Naive thymus-derived CD4-positive, alpha-beta T cell (primary cell): ENCODE measurements at regions of chr14 and their contacts with region 1.

Region 1: GRCh38 chr14:49862089-49862673 is 9.6 kb upstream of the NEMF start:
- DNase-seq: peak; percentile 78 to 94 (median 89)
- ATAC-seq: peak; percentile 73
- H3K4me3 ChIP-seq: peak overlapping the region; percentile 94
- H3K4me3 Mint-ChIP-seq: no peak overlapping the region
- H3K27ac ChIP-seq: peak overlapping the region; percentile 95
- H3K27ac Mint-ChIP-seq: no peak overlapping the region
- H3K4me1 ChIP-seq: peaks cover 19 to 25% of the 10 kb centered on the region in 2 donors
- H3K4me1 Mint-ChIP-seq: peaks cover 0 to 33% (median 7%) of the 10 kb centered on the region in 7 donors
- H3K27me3 ChIP-seq: no peaks in the 10 kb centered on the region
- H3K27me3 Mint-ChIP-seq: peaks cover 0 to 9% (median 0%) of the 10 kb centered on the region in 5 donors

Region 2: GRCh38 chr14:49585803-49586672 is 276.1 kb before region 1 on chr14 and contains the start of gene RPS29:
- CTCF ChIA-PET with region 1: interaction called, 4 read pairs
- POLR2A ChIA-PET with region 1: interaction called, 8 read pairs
- intact Hi-C with region 1: loop called in 1 of 2 experiments (anchors 1 kb)
- DNase-seq: peak; percentile 97 to 99 (median 99)
- ATAC-seq: peak; percentile 91
- H3K4me3 ChIP-seq: peak within 1 kb of the TSS; percentile 98
- H3K4me3 Mint-ChIP-seq: peak within 1 kb of the TSS; percentile 87 to 100 (median 94)
- H3K27ac ChIP-seq: peak within 1 kb of the TSS; percentile 84
- H3K27ac Mint-ChIP-seq: peak within 1 kb of the TSS; percentile 90 to 100 (median 98)
- H3K4me1 ChIP-seq: peaks cover 19 to 21% of the 10 kb centered on the region in 2 donors
- H3K4me1 Mint-ChIP-seq: peaks cover 33 to 60% (median 46%) of the 10 kb centered on the region in 7 donors
- H3K27me3 ChIP-seq: no peaks in the 10 kb centered on the region
- H3K27me3 Mint-ChIP-seq: peaks cover 0 to 5% (median 0%) of the 10 kb centered on the region in 5 donors
- total RNA-seq, gene RPS29: 2,254 to 4,907 (median 2,729) TPM

Region 3: DNA sequence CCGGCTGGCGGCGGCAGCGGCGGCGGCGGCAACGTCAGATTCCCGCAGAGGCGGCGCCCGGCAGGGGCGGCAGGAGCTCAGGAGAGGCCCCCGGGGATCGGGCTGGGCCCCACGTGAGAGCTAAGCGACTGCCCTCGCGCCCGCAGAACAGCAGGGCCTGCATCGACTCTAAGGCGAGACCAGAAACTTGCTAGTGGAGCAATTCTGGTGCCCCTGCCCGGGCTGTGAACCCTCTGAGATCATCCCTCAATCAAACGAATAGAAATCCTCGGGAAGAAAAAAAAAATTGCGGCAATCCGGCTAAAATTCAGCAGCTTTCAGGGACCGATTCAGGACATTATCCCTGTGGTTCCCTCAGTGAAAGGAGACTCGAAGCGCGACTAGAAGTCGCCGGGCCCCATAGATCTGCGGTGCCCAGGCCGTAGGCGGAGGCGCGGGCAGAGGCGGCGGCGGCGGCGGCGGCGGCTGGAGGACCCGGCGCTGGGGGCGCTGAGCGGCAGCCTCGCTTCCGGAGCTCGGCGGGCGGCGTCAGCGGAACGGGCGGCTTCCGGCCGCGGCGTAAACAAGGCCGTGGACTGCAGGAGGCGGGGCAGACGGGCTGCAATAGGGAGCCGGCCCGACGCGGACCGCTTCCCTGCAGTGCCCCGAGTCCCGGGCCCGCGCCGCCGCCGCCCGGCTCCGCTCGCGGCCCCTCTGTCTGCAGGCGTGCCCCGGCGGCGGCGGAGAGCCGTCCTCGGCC is 94.5 kb before region 1 on chr14 and contains the start of gene KLHDC2:
- CTCF ChIA-PET with region 1: interaction called, 15 read pairs
- POLR2A ChIA-PET with region 1: interaction called, 22 read pairs
- intact Hi-C with region 1: loop called in 1 of 2 experiments (anchors 1 kb)
- DNase-seq: peak; percentile 84 to 94 (median 89)
- ATAC-seq: peak; percentile 88
- H3K4me3 ChIP-seq: peak within 1 kb of the TSS; percentile 62
- H3K4me3 Mint-ChIP-seq: peak within 1 kb of the TSS; percentile 95 to 99 (median 98)
- H3K27ac ChIP-seq: peak within 1 kb of the TSS; percentile 96
- H3K27ac Mint-ChIP-seq: peak within 1 kb of the TSS; percentile 98 to 100 (median 99)
- H3K4me1 ChIP-seq: peaks cover 26 to 27% of the 10 kb centered on the region in 2 donors
- H3K4me1 Mint-ChIP-seq: peaks cover 20 to 46% (median 40%) of the 10 kb centered on the region in 7 donors
- H3K27me3 ChIP-seq: no peaks in the 10 kb centered on the region
- H3K27me3 Mint-ChIP-seq: peaks cover 0 to 2% (median 0%) of the 10 kb centered on the region in 5 donors
- total RNA-seq, gene KLHDC2: 33.2 to 105 (median 84.7) TPM

Region 4: DNA sequence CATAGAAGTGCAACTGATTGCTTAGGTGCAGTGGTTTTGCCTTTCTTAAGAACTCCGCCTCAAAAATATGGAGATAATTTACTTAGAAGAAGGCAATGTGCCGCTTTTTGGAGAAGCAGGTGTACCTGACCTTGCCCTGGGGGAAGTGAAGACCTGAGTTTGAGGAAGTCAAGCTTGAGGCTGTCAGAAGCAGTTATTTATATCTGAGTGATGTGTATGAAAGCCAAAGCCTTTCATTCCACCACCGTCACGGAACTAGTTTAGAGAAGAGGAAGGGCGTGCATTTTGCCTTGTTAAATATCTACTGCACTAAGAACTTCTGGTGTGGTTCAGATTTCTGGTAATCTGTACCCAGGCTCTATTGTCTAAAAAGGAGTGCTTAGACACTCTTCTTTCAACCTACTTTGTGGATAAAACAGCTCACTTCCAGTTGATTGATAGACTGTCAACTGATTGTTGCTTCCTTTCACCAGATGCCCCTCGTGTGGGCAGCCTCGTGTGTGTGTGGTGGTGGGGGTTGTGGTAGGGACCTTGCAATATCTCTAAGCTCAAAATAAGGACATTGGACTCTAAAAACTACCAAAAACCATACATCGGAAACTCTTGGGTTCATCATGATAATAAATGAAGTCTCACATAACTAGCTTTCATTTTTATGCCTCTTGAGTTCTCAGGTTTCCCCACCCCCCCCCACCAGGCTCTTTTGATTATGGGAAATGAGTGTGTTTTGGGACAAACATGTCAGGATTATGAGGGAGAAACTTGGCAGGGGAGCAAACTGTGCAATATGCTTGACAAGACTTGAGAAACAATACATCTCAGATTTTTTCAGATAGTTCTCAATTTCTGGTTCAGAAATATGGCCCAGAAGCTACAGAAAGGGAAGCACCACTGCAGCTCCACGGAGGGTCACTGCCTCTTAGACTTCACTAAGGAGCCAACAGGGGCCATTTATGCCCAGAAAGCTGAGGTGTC is 109.3 kb after region 1 on chr14:
- CTCF ChIA-PET with region 1: interaction called, 19 read pairs
- POLR2A ChIA-PET with region 1: interaction called, 87 read pairs
- intact Hi-C with region 1: loop called (anchors 1 kb)
- DNase-seq: peak in 8 of 9 donors; percentile 59 to 94 (median 90)
- ATAC-seq: peak; percentile 92
- H3K4me3 ChIP-seq: peak overlapping the region; percentile 40
- H3K4me3 Mint-ChIP-seq: peak overlapping the region; percentile 75 to 96 (median 86)
- H3K27ac ChIP-seq: peak overlapping the region; percentile 74
- H3K27ac Mint-ChIP-seq: peak overlapping the region; percentile 96 to 99 (median 99)
- H3K4me1 ChIP-seq: peaks cover 35 to 49% of the 10 kb centered on the region in 2 donors
- H3K4me1 Mint-ChIP-seq: peaks cover 32 to 88% (median 63%) of the 10 kb centered on the region in 7 donors
- H3K27me3 ChIP-seq: no peaks in the 10 kb centered on the region
- H3K27me3 Mint-ChIP-seq: no peaks in the 10 kb centered on the region

Region 5: GRCh38 chr14:50060871-50061663 is 198.9 kb after region 1 on chr14:
- CTCF ChIA-PET with region 1: interaction called, 51 read pairs
- POLR2A ChIA-PET with region 1: interaction called, 155 read pairs
- intact Hi-C with region 1: loop called (anchors 1 kb)
- DNase-seq: peak in 2 of 9 donors; percentile 27 to 61
- ATAC-seq: no peak
- H3K4me3 ChIP-seq: peak overlapping the region; percentile 53
- H3K4me3 Mint-ChIP-seq: peak overlapping the region; percentile 74 to 94 (median 89)
- H3K27ac ChIP-seq: peak overlapping the region; percentile 79
- H3K27ac Mint-ChIP-seq: peak overlapping the region; percentile 96 to 100 (median 99)
- H3K4me1 ChIP-seq: peaks cover 61 to 69% of the 10 kb centered on the region in 2 donors
- H3K4me1 Mint-ChIP-seq: peaks cover 70 to 93% (median 89%) of the 10 kb centered on the region in 7 donors
- H3K27me3 ChIP-seq: no peaks in the 10 kb centered on the region
- H3K27me3 Mint-ChIP-seq: no peaks in the 10 kb centered on the region

Region 6: GRCh38 chr14:50091240-50091913 is 229.2 kb after region 1 on chr14:
- CTCF ChIA-PET with region 1: interaction called, 15 read pairs
- POLR2A ChIA-PET with region 1: interaction called, 328 read pairs
- intact Hi-C with region 1: no loop called
- DNase-seq: no peak
- ATAC-seq: peak; percentile 38
- H3K4me3 ChIP-seq: no peak overlapping the region
- H3K4me3 Mint-ChIP-seq: peak overlapping the region in 5 of 10 donors; percentile 10 to 55 (median 50)
- H3K27ac ChIP-seq: peak overlapping the region; percentile 21
- H3K27ac Mint-ChIP-seq: peak overlapping the region in 8 of 9 donors; percentile 4 to 97 (median 80)
- H3K4me1 ChIP-seq: peaks cover 44 to 70% of the 10 kb centered on the region in 2 donors
- H3K4me1 Mint-ChIP-seq: peaks cover 60 to 96% (median 80%) of the 10 kb centered on the region in 7 donors
- H3K27me3 ChIP-seq: no peaks in the 10 kb centered on the region
- H3K27me3 Mint-ChIP-seq: no peaks in the 10 kb centered on the region

Region 7: DNA sequence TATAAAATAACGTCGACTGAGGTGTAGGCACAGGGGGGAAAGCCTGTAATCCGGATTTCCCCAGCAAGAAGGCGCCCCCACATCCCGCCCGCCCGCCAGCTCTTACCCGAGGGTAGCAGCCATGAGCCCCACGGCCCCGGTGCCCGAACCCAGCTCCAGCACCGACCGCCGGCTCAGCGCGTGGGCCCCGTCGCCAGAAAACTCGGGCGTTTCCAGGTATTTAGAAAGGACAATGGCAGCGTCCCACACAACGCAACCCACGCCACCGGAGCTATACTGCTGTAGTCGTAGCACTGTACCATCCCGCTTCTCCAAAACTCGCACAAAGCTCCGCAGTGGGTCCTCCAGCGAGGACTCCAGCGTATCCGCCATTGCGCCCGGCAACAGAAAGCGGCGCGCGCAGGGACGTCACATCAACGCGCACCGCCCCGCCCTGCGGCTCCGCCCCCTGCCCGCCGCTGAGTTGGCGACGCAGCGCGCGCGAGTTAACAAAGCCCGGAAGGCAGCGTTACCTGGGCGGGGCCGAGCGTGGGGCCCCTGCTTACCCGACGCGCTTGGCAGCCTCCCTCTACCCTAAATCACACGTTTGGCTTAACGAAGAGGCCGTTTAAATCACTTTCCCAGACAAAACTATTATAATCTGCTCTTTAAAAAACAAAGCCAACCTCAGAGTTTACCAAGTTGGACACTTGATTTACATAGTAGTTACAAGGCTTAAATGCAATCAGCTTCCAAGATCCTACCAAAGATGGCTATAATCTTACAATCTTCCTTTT is 254.2 kb after region 1 on chr14 and contains the start of gene VCPKMT:
- CTCF ChIA-PET with region 1: interaction called, 12 read pairs
- POLR2A ChIA-PET with region 1: interaction called, 40 read pairs
- intact Hi-C with region 1: loop called (anchors 1 kb)
- DNase-seq: peak; percentile 93 to 97 (median 97)
- ATAC-seq: peak; percentile 99
- H3K4me3 ChIP-seq: peak within 1 kb of the TSS; percentile 74
- H3K4me3 Mint-ChIP-seq: peak within 1 kb of the TSS; percentile 92 to 98 (median 96)
- H3K27ac ChIP-seq: peak within 1 kb of the TSS; percentile 94
- H3K27ac Mint-ChIP-seq: peak within 1 kb of the TSS; percentile 97 to 99 (median 98)
- H3K4me1 ChIP-seq: peaks cover 18 to 20% of the 10 kb centered on the region in 2 donors
- H3K4me1 Mint-ChIP-seq: peaks cover 11 to 37% (median 23%) of the 10 kb centered on the region in 7 donors
- H3K27me3 ChIP-seq: no peaks in the 10 kb centered on the region
- H3K27me3 Mint-ChIP-seq: no peaks in the 10 kb centered on the region
- total RNA-seq, gene VCPKMT: 10.3 to 25.9 (median 17.4) TPM